K562 (cell line): ENCODE measurements at regions of chr11 and their contacts with region 1.

Region 1: DNA sequence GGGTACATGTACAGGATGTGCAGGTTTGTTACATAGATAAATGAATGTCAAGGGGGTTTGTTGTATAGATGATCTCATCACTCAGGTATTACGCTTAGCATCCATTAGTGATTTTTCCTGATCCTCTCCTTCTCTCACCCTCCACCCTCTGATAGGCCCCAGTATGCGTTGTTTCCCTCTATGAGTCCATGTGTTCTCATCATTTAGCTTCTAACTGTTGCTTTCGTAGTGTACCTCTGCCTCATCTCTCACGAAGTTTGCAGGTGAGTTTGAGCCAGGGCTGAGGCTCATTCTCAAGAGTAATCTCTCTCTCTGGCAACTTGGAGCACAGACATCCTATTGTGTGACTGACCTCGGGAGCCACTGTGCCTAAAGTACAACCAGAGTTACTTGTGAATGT is 4.7 kb upstream of the HBE1 start:
- DNase-seq: no peak
- ATAC-seq: no peak
- H3K4me3 ChIP-seq: no peak overlapping the region
- H3K27ac ChIP-seq: peak overlapping the region; percentile 87
- H3K4me1 ChIP-seq: peaks cover 26 to 74% of the 10 kb centered on the region in 2 experiments
- H3K27me3 ChIP-seq: no peaks in the 10 kb centered on the region
- CTCF ChIP-seq: no peak
- EP300 ChIP-seq: no peak
- POLR2A ChIP-seq: no peak
- RAD21 ChIP-seq: no peak

Region 2: DNA sequence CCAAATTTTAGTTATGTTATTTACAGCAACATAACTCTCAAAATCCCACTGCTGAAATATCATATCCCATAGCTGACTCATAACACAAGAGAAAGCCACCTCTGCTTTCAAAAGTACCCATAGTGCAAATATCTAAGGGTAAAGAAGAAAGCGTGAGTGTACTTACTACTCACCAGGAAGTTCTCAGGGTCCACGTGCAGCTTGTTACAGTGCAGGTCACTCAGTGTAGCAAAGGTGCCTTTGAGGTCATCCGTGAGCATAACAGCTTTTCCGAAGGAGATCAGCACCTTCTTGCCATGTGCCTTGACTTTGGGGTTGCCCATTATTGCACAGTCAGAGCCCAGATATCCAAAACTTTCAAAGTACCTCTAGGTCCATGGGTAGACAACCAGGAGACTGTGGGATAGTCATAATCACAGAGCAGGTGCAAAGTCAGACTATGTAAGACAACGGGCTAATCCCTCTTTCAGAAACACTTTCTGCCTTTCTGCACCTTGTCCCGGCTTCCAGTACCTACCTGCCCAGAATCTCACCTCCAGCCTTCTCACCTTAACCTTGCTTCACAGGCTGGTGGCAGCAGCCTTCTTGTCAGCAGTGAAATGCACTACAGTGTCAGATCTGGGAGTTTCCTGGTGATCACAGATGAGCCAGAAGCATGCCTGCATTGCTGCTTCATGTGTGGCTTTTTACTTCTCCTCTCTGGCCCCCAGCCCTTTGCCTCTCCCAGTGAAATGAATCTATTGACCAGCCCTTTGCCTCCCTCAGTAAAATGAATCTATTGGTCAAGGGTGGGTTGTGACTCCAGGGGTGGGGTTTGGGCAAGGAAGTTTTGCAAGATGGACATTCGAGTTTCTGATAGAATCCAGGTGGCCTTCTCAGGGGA is 31.2 kb before region 1 on chr11:
- CTCF ChIA-PET with region 1: interaction called, 4 read pairs
- POLR2A ChIA-PET with region 1: interaction called, 21 read pairs
- in situ Hi-C with region 1: no loop called
- intact Hi-C with region 1: no loop called
- DNase-seq: peak in 2 of 4 experiments; percentile 59 to 88
- ATAC-seq: peak; percentile 61
- H3K4me3 ChIP-seq: peak overlapping the region; percentile 26
- H3K27ac ChIP-seq: peak overlapping the region; percentile 80
- H3K4me1 ChIP-seq: peaks cover 8 to 36% of the 10 kb centered on the region in 2 experiments
- H3K27me3 ChIP-seq: no peaks in the 10 kb centered on the region
- CTCF ChIP-seq: no peak
- EP300 ChIP-seq: peak; percentile 26; the same call in 1 of the 2 replicates
- POLR2A ChIP-seq: peak; percentile 93
- RAD21 ChIP-seq: no peak

Region 3: DNA sequence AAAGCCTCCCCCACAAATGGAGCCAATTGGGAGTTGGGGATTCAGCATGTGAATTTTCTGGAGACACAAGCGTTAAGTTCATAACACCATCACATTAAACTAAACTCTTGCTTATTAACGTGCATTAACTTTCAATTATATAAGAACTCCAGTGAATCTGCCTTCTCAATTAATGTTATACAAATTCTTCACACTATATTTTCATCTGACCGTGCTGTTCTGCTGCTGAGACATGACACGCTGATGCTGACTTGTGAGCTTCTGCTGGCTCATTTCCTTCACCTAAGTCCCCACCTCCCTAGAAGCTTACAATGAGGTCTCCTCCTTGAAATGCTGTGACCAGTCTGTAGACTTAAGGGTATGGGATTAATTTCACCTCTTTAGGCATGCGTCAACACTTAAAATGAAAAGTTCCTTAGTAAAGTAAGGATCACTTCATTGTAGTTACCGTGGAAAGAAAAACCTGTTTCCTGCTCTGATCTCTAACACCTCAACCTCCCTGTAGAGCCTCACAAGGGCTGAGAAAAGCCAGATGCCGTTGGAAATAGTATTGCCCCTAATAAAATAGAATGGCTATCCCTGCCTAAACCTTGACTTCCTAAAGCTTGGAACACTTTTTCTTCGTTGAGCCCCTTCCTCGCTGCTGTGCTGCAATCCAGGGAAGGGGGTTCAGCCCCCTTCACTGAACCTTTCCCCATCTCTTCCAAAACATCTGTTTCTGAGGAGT is 22.0 kb before region 1 on chr11:
- CTCF ChIA-PET with region 1: no interaction called
- POLR2A ChIA-PET with region 1: interaction called, 31 read pairs
- in situ Hi-C with region 1: no loop called
- intact Hi-C with region 1: no loop called
- DNase-seq: peak in 3 of 4 experiments; percentile 46 to 72 (median 59)
- ATAC-seq: 0 out of 3 replicates have a peak, but pooled peaks have one; percentile 4
- H3K4me3 ChIP-seq: peak overlapping the region; percentile 58
- H3K27ac ChIP-seq: peak overlapping the region; percentile 73
- H3K4me1 ChIP-seq: peaks cover 11 to 20% of the 10 kb centered on the region in 2 experiments
- H3K27me3 ChIP-seq: no peaks in the 10 kb centered on the region
- CTCF ChIP-seq: no peak
- EP300 ChIP-seq: no peak
- POLR2A ChIP-seq: no peak; the same call in none of the 2 replicates
- RAD21 ChIP-seq: no peak

Region 4: DNA sequence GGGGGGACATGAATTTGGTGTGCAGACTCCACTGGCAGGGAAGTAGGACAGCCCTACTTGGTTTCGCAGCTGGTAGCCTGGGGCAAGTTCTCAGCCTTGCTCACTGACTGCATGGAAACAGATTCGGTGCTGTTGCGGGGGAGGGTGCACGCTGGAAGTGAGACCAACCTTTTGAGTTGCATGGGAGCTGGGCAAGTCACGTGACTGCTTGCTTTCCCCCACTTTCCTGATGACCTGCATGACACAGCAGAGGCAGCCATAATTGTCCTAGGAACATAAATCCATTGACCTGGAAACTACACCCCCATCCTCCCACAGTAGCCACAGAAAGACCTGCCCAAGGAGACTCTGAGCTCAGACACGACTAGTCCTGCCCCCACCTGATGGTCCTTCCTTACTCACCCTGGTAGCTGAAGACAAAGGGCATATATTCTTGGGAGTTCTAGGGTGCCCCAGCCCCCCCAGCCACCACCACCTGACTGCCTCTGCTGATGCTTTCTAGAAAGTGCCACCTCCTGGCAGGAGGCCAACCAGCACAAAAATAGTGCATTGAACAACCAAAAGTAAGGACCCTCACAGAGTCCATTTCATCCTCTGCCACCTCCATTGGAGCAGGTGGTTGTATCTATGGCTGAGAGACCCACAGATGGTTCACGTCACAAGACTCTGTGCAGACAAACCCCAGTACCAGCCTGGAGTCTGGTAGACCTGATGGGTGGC is 15.7 kb before region 1 on chr11:
- CTCF ChIA-PET with region 1: no interaction called
- POLR2A ChIA-PET with region 1: interaction called, 31 read pairs
- in situ Hi-C with region 1: no loop called
- intact Hi-C with region 1: no loop called
- DNase-seq: peak; percentile 40 to 89 (median 48)
- ATAC-seq: peak; percentile 8
- H3K4me3 ChIP-seq: no peak overlapping the region
- H3K27ac ChIP-seq: peak overlapping the region; percentile 56
- H3K4me1 ChIP-seq: peaks cover 25 to 40% of the 10 kb centered on the region in 2 experiments
- H3K27me3 ChIP-seq: no peaks in the 10 kb centered on the region
- CTCF ChIP-seq: no peak
- EP300 ChIP-seq: peak; percentile 29; the same call in 1 of the 2 replicates
- POLR2A ChIP-seq: no peak
- RAD21 ChIP-seq: no peak

Region 5: DNA sequence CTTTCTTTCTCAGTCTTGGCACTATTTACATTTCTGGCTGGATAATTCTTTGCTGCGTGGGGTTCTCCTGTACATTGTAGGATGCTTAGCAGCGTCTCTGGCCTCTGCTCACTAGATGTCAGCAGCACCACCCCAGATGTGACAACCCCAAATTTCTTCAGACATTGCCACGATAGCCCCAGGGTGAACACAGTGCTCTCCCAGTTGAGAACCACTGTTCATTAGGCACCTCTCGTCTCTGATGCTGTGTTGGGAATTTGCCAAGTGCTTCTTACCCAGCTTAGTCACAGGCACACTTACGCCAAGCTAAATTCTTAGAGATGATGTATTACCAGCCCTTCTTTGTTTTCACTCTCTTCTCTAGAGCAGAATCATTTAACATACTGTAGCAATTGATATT is 331.5 kb after region 1 on chr11:
- CTCF ChIA-PET with region 1: no interaction called
- POLR2A ChIA-PET with region 1: no interaction called
- in situ Hi-C with region 1: no loop called
- intact Hi-C with region 1: no loop called
- DNase-seq: no peak
- ATAC-seq: no peak; the same call in 1 of the 3 replicates
- H3K4me3 ChIP-seq: no peak overlapping the region
- H3K27ac ChIP-seq: no peak overlapping the region
- H3K4me1 ChIP-seq: peaks cover 0 to under 1% of the 10 kb centered on the region in 2 experiments; a peak in 1 of 5 replicates
- H3K27me3 ChIP-seq: no peaks in the 10 kb centered on the region
- CTCF ChIP-seq: peak in 2 of 3 experiments; percentile 5 to 28; a peak in 2 of 6 replicates
- EP300 ChIP-seq: no peak
- POLR2A ChIP-seq: no peak
- RAD21 ChIP-seq: 0 out of 4 replicates have a peak, but pooled peaks of 1 of the 2 experiments have one; percentile 17